Lower leg skin (tissue), 4 donors: ENCODE measurements at regions of chr1 and their contacts with region 1.

Region 1: GRCh38 chr1:9494929-9495758 is 44.1 kb upstream of the SLC25A33 start:
- DNase-seq: peak in 1 of 2 donors; percentile 86
- H3K4me3 ChIP-seq: no peak overlapping the region
- CTCF ChIP-seq: peak in 1 of 3 donors; percentile 51
- POLR2A ChIP-seq: no peak

Region 2: DNA sequence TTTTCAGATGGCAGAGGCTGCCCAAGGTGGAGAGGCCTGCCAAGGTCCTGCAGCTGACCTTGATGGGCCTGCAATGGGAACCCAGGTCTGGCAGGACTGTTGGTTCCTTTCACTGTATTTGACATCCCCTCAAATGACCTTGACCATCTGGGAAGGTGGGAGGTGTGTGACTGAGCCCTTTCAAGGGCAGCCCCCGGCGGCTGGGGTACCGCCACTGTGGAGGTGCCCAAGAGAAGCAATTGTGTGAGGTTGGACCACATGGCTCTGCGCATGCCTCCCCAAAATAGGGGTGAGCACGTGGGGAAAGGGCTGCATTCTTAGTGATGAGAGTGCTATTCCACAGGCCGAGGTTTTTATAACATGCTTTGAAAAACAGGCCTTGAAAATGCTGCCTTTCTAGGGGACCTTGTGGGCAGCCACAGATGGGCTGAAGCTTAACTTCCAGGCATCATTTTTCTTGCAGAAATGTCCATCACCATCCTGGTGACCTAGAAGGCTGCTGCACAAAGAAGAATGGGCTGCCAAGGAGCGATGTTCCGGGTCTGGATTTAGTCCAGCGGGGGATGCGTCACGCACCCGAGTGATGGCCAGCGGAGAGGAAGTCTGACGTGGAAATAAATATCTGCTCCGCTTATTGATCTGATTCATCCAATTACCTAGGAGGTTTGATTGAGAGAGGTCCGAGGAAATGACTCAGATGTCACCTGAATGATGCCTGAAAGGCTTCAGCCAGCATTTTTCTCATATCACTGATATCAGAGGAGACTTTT is 1625.8 kb before region 1 on chr1:
- intact Hi-C with region 1: no loop called
- DNase-seq: peak in 1 of 2 donors; percentile 60
- H3K4me3 ChIP-seq: no peak overlapping the region
- CTCF ChIP-seq: no peak
- POLR2A ChIP-seq: no peak

Region 3: DNA sequence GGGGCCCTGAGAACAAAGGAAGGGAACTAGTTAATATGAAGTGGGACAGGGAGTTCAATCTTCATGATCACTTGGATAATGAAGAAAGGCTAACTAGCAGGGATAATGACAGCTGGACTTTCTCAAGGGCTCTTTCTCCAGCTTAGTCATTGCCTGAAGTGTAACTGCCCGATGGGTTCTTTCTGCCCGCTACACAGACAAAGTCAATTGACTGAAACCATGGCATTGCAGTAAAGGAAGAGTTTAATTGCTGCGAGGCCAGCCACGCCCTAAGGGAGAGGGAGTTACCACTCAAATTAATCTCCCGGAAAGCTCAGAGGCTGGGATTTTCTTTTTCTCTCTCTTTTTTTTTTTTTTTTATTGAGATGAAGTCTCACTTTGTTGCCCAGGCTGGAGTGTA is 409.1 kb before region 1 on chr1:
- intact Hi-C with region 1: no loop called
- DNase-seq: no peak
- H3K4me3 ChIP-seq: no peak overlapping the region
- CTCF ChIP-seq: no peak
- POLR2A ChIP-seq: no peak

Region 4: DNA sequence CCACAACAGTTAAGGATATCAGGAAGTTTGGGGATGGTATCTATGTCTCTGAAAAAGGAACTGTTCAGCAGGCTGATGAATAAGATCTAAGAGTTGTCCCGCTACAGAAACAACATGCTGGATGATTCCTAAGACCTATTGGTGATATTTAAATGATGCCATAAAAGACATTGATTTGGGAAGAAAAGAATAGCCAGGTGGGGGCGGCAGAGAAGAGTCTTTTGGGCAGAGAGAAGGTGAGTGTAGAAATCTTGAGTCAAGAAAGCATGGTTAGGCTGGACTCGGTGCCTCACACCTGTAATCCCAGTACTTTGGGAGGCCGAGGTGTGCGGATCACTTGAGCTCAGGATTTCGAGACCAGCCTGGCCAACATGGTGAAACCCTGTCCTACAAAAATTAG is 81.8 kb after region 1 on chr1:
- intact Hi-C with region 1: loop called (anchors 5 kb)
- DNase-seq: no peak
- H3K4me3 ChIP-seq: no peak overlapping the region
- CTCF ChIP-seq: no peak
- POLR2A ChIP-seq: no peak